Gastrocnemius medialis (tissue), 4 donors: ENCODE measurements at regions of chr12 and their contacts with region 1.

Region 1: GRCh38 chr12:48618541-48618940 is 48.7 kb upstream of the LALBA start:
- DNase-seq: peak; percentile 32 to 57
- ATAC-seq: peak; percentile 81 to 89
- H3K4me3 ChIP-seq: no peak overlapping the region
- H3K27ac ChIP-seq: no peak overlapping the region
- H3K4me1 ChIP-seq: no peaks in the 10 kb centered on the region
- H3K27me3 ChIP-seq: peaks cover 0 to 12% (median 3%) of the 10 kb centered on the region in 3 donors
- CTCF ChIP-seq: peak; percentile 77 to 96 (median 84)
- POLR2A ChIP-seq: no peak

Region 2: DNA sequence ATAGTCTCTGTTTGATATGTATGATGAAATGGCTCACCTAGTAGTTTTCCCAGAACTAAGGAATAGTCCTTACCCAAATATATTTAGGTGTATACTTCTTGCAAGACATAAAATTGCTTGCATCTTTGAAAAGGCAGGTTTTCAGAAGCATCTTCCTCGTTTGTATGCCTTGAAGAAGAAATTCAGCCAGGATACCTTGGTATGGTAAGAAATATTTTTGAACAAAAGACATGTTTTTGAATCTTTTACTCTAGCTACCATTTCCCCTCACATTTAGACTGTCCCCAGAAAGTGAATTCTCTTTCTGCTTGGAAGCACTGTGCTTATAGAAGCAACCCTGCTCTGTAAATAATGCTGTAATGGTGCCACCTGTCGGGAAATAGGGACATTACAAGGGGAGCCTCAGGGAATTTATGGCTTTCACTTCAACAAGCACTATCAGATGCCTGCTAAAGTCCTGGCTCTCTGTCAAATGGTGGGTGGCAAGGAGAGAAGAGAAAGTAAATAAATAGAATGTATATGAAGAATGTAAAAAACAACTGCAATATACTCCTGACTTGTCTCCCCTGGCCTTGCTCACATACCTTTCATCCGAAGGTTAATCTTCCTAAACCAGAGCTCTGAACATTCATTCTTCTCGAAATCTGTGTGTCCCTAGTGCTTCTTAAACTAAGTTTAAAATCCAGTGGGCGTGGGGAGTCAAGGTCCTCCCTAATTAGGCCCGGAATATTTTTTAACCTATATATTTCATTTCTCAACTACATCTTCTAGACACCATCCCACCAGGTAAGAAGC is 429.0 kb before region 1 on chr12:
- in situ Hi-C with region 1: no loop called
- intact Hi-C with region 1: loop called (anchors 5 kb)
- DNase-seq: peak in 1 of 2 donors; percentile 54
- ATAC-seq: peak; percentile 64 to 82
- H3K4me3 ChIP-seq: no peak overlapping the region
- H3K27ac ChIP-seq: no peak overlapping the region
- H3K4me1 ChIP-seq: no peaks in the 10 kb centered on the region
- H3K27me3 ChIP-seq: peaks cover under 1 to 13% (median 12%) of the 10 kb centered on the region in 3 donors
- CTCF ChIP-seq: peak; percentile 70 to 88 (median 79)
- POLR2A ChIP-seq: no peak

Region 3: DNA sequence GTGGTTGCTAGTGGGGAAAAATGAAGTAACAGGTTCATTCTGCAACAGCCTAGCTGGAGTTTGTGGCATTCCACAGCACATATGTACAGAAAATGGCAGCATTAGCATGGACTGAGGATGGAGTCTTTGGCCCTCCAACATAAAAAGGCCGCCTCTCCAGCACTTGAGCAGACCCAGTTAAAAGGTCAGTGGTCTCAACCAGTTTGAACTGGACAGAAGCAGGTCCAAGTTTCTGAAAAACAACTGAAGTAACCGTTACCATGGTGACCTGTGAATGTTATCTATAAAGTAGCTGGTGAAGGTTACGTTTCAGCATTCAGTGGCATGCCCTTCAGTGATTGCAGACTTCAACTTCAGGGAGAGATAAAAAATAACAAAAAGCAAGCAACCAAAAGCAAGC is 381.4 kb before region 1 on chr12:
- in situ Hi-C with region 1: loop called in 1 of 4 experiments (anchors 25 kb)
- intact Hi-C with region 1: no loop called
- DNase-seq: no peak
- ATAC-seq: no peak
- H3K4me3 ChIP-seq: no peak overlapping the region
- H3K27ac ChIP-seq: no peak overlapping the region
- H3K4me1 ChIP-seq: no peaks in the 10 kb centered on the region
- H3K27me3 ChIP-seq: no peaks in the 10 kb centered on the region
- CTCF ChIP-seq: no peak
- POLR2A ChIP-seq: no peak

Region 4: GRCh38 chr12:48508991-48509390 is 109.5 kb before region 1 on chr12:
- in situ Hi-C with region 1: no loop called
- intact Hi-C with region 1: no loop called
- DNase-seq: no peak
- ATAC-seq: no peak
- H3K4me3 ChIP-seq: no peak overlapping the region
- H3K27ac ChIP-seq: no peak overlapping the region
- H3K4me1 ChIP-seq: no peaks in the 10 kb centered on the region
- H3K27me3 ChIP-seq: no peaks in the 10 kb centered on the region
- CTCF ChIP-seq: no peak
- POLR2A ChIP-seq: no peak